ENCODE measurements at regions of chr13 and their contacts with region 1.

Region 1: DNA sequence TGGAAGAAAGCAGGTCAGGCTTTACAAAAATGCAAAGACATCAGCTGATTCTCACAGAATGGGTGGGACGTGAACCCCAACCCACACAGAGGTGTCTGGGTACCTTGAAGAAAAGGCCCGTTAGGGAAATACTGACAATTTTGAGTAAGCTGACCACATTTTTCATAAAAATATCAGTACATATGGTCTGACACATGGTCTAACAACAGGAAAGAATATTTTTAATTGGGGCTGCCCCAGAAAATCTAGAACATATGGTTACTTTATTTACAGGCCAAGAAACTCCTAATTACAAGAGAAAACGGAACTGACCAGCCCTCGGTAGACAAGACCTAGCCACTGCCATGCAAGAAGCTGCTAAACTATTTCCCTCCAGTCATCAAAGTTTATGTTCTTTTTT is 48.7 kb upstream of the ITM2B start:
- DNase-seq: no peak
- ATAC-seq: no peak
- H3K4me3 Mint-ChIP-seq: peak overlapping the region; percentile 6 to 76 (median 62)
- H3K27ac Mint-ChIP-seq: peak overlapping the region; percentile 78 to 99 (median 94)
- H3K4me1 Mint-ChIP-seq: peaks cover 31 to 74% (median 64%) of the 10 kb centered on the region in 4 donors
- H3K27me3 Mint-ChIP-seq: no peaks in the 10 kb centered on the region

Region 2: GRCh38 chr13:48126944-48127830 is 57.1 kb before region 1 on chr13:
- POLR2A ChIA-PET with region 1: interaction called, 17 read pairs
- DNase-seq: peak in 9 of 10 donors; percentile 10 to 82 (median 47)
- ATAC-seq: peak; percentile 85 to 91
- H3K4me3 Mint-ChIP-seq: peak overlapping the region; percentile 34 to 78 (median 62)
- H3K27ac Mint-ChIP-seq: peak overlapping the region; percentile 88 to 97 (median 94)
- H3K4me1 Mint-ChIP-seq: peaks cover 14 to 31% (median 25%) of the 10 kb centered on the region in 4 donors
- H3K27me3 Mint-ChIP-seq: no peaks in the 10 kb centered on the region

Region 3: DNA sequence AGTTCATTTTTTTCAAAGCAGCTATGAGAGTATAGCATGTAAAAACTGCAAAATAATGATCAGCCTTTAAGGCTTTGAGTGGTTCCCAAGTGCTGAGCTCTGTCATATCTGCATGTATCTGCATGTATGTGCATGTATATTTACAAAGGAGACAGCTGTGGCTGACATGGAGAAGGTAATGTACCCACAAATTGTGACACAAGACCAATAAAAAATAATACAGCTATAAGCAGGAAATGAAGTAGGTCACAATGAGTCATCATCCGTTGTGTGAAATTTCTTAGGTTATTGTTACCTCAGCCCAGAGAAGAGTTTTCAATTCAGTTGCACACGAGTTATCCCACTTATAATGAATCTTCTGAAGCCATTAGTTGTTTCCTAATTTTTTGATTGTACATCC is 28.4 kb before region 1 on chr13:
- POLR2A ChIA-PET with region 1: interaction called, 47 read pairs
- DNase-seq: peak in 9 of 10 donors; percentile 17 to 79 (median 56)
- ATAC-seq: peak; percentile 75 to 87
- H3K4me3 Mint-ChIP-seq: peak overlapping the region; percentile 57 to 89 (median 78)
- H3K27ac Mint-ChIP-seq: peak overlapping the region; percentile 93 to 99 (median 97)
- H3K4me1 Mint-ChIP-seq: peaks cover 46 to 95% (median 86%) of the 10 kb centered on the region in 4 donors
- H3K27me3 Mint-ChIP-seq: no peaks in the 10 kb centered on the region